Esophagus muscularis mucosa (tissue), 4 donors: ENCODE measurements at regions of chr18 and their contacts with region 1.

Region 1: DNA sequence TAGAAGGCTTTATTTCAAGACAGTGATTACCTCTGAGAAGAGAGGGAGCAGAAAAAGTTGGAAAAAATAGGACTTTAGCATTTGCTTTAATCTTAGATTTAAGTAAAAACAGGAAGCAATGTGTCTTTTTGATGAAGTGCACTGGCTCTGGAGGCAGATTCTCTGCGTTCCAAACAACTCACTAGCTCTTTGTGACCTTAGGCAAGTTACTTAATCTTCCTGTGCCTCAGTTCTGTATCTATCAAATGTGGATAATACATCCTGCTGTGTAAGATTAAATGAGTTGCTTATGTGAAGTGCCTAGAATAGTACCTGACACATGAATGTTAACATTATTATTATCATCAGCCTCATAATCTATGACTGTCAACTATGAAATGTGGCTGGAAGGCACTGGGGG is 42.3 kb downstream of the RPRD1A start:
- DNase-seq: no peak
- H3K4me3 ChIP-seq: no peak overlapping the region
- H3K27ac ChIP-seq: no peak overlapping the region
- H3K4me1 ChIP-seq: peaks cover 0 to 4% (median 0%) of the 10 kb centered on the region in 4 donors
- H3K27me3 ChIP-seq: no peaks in the 10 kb centered on the region
- CTCF ChIP-seq: no peak
- EP300 ChIP-seq: no peak
- POLR2A ChIP-seq: no peak

Region 2: GRCh38 chr18:36129300-36130038 is 104.4 kb after region 1 on chr18 and contains the starts of genes ELP2 and SLC39A6:
- intact Hi-C with region 1: loop called (anchors 10 kb)
- DNase-seq: peak; percentile 98
- H3K4me3 ChIP-seq: peak within 1 kb of the TSS; percentile 80 to 93 (median 89)
- H3K27ac ChIP-seq: peak within 1 kb of the TSS; percentile 92 to 99 (median 95)
- H3K4me1 ChIP-seq: peaks cover 29 to 51% (median 38%) of the 10 kb centered on the region in 4 donors
- H3K27me3 ChIP-seq: no peaks in the 10 kb centered on the region
- CTCF ChIP-seq: no peak
- EP300 ChIP-seq: no peak
- POLR2A ChIP-seq: peak; percentile 54
- total RNA-seq, gene ELP2: 43.4 to 63.1 (median 48.2) TPM
- total RNA-seq, gene SLC39A6: 26.6 to 39.1 (median 33.5) TPM